CD4-positive, alpha-beta memory T cell (primary cell): ENCODE measurements at regions of chr20 and their contacts with region 1.

Region 1: DNA sequence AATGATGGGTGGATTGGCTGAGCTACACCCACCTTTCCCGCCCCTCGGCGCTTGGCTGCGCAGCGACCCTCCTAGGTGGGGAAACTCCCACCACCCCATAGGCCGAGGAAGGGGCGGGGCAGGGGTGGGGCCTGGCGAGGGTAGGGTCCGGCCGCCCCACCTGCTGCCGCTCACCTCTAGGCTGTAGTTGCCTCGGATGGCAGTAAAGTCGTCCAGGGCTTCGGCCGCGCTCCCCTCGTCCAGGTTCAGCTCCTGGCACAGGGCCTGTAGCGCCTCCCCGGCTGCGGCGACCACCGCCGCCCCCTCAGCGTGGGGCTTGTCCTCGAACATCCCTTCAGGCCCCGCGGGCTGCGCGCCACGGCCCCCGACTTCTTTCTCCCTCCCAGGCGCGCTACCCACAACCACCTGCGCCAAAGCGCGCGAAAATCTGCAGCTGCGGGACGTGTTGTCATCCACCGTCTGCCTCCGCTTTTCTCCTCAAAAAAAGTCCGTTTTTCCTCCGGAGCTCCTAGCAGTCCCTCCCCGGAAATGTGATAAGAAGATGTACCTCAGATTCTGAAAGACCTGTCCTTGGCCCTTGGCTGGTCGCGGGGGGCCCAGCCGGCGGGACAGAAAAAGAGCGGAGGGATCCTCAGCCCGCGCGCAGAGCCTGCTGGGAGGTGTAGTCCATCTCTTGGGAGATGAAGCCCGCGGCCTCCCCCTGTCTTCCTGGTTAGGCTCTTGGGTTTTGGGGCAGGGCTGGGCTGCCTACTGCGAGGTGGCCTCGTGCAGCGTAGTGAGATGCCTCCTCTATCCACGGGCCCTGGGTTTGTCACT is at the start of gene RBL1:
- DNase-seq: peak; percentile 90 to 92 (median 91)
- H3K4me3 ChIP-seq: peak within 1 kb of the TSS; percentile 92
- H3K4me3 Mint-ChIP-seq: peak within 1 kb of the TSS; percentile 98 to 100 (median 99)
- H3K27ac ChIP-seq: peak within 1 kb of the TSS; percentile 85
- H3K27ac Mint-ChIP-seq: peak within 1 kb of the TSS; percentile 99 to 100 (median 100)
- H3K4me1 ChIP-seq: peaks cover 37% of the 10 kb centered on the region
- H3K4me1 Mint-ChIP-seq: peaks cover 18 to 47% (median 30%) of the 10 kb centered on the region in 4 donors
- H3K27me3 ChIP-seq: no peaks in the 10 kb centered on the region
- H3K27me3 Mint-ChIP-seq: peaks cover 0 to 4% of the 10 kb centered on the region in 2 donors
- total RNA-seq, gene RBL1: 29.9 to 39.6 TPM

Region 2: GRCh38 chr20:36951198-36951976 is 144.4 kb before region 1 on chr20 and contains the start of gene SAMHD1:
- CTCF ChIA-PET with region 1: no interaction called
- POLR2A ChIA-PET with region 1: interaction called, 8 read pairs
- intact Hi-C with region 1: loop called (anchors 5 kb)
- DNase-seq: peak; percentile 86 to 89 (median 86)
- H3K4me3 ChIP-seq: peak within 1 kb of the TSS; percentile 90 to 98
- H3K4me3 Mint-ChIP-seq: peak within 1 kb of the TSS; percentile 95 to 100 (median 98)
- H3K27ac ChIP-seq: peak within 1 kb of the TSS; percentile 87
- H3K27ac Mint-ChIP-seq: peak within 1 kb of the TSS; percentile 94 to 100 (median 98)
- H3K4me1 ChIP-seq: peaks cover 49% of the 10 kb centered on the region
- H3K4me1 Mint-ChIP-seq: peaks cover 24 to 55% (median 35%) of the 10 kb centered on the region in 4 donors
- H3K27me3 ChIP-seq: no peaks in the 10 kb centered on the region
- H3K27me3 Mint-ChIP-seq: no peaks in the 10 kb centered on the region
- total RNA-seq, gene SAMHD1: 216 to 223 TPM

Region 3: DNA sequence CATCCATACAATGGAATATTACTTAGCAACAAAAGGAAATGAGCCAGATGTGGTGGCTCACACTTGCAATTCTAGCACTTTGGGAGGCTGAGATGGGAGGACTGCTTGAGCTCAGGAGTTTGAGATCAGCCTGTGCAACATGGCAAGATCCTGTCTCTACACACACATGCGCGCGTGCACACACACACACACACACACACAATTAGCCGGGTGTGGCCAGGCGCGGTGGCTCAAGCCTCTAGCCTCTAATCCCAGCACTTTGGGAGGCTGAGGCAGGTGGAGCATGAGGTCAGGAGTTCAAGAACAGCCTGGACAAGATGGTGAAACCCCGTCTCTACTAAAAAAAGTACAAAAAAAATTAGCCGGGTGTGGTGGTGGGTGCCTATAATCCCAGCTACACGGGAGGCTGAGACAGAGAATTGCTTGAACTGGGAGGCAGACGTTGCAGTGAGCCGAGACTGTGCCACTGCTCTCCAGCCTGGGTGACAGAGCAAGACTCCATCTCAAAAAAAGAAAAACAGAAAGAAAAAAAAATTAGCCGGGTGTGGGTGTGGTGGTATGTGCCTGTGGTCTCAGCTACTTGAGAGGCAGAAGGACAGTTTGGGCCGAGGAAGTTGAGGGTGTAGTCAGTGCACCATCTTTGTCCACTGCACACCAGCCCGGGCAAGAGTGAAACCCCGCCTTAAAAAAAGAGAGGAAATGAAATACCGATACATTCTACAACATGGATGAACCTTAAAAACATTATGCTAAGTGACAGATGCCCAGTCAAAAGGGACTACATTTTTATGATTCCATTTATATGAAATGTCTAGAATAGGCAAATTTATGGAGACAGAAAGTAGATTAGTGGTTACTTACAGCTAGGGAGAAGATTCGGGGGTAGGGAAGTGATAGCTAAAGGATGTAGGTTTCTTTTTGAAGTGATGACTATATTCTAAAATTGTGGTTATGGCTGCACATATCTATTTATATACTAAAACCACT is 52.5 kb before region 1 on chr20:
- CTCF ChIA-PET with region 1: no interaction called
- POLR2A ChIA-PET with region 1: interaction called, 21 read pairs
- intact Hi-C with region 1: no loop called
- DNase-seq: peak; percentile 45 to 61 (median 52)
- H3K4me3 ChIP-seq: peak overlapping the region; percentile 5 to 51
- H3K4me3 Mint-ChIP-seq: peak overlapping the region; percentile 87 to 98 (median 93)
- H3K27ac ChIP-seq: peak overlapping the region; percentile 53
- H3K27ac Mint-ChIP-seq: peak overlapping the region; percentile 88 to 99 (median 96)
- H3K4me1 ChIP-seq: peaks cover 28% of the 10 kb centered on the region
- H3K4me1 Mint-ChIP-seq: peaks cover 13 to 33% (median 23%) of the 10 kb centered on the region in 4 donors
- H3K27me3 ChIP-seq: no peaks in the 10 kb centered on the region
- H3K27me3 Mint-ChIP-seq: no peaks in the 10 kb centered on the region

Region 4: DNA sequence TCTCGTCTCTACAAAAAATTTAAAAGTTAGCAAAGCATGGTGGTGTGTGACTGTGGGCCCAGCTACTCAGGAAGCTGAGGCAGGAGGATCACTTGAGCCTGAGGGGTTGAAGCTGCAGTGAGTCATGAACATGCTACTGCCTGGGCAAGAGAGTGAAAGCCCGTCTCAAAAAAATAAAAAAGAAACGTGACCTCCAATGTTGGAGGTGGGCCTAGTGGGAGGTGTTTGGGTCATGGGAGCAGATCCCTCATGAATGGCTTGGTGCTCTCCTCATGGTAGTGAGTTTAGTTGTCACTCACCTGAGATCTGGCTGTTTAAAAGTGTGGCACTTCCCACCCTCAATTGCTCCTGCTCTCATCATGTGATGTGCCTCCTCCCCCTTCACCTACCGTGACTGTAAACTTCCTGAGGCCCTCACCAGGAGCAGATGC is 24.3 kb before region 1 on chr20:
- CTCF ChIA-PET with region 1: no interaction called
- POLR2A ChIA-PET with region 1: interaction called, 28 read pairs
- intact Hi-C with region 1: no loop called
- DNase-seq: peak; percentile 8 to 58 (median 32)
- H3K4me3 ChIP-seq: no peak overlapping the region
- H3K4me3 Mint-ChIP-seq: peak overlapping the region in 7 of 8 donors; percentile 18 to 77 (median 65)
- H3K27ac ChIP-seq: peak overlapping the region; percentile 29
- H3K27ac Mint-ChIP-seq: peak overlapping the region; percentile 82 to 95 (median 88)
- H3K4me1 ChIP-seq: peaks cover 36% of the 10 kb centered on the region
- H3K4me1 Mint-ChIP-seq: peaks cover 15 to 35% (median 28%) of the 10 kb centered on the region in 4 donors
- H3K27me3 ChIP-seq: no peaks in the 10 kb centered on the region
- H3K27me3 Mint-ChIP-seq: no peaks in the 10 kb centered on the region

Region 5: DNA sequence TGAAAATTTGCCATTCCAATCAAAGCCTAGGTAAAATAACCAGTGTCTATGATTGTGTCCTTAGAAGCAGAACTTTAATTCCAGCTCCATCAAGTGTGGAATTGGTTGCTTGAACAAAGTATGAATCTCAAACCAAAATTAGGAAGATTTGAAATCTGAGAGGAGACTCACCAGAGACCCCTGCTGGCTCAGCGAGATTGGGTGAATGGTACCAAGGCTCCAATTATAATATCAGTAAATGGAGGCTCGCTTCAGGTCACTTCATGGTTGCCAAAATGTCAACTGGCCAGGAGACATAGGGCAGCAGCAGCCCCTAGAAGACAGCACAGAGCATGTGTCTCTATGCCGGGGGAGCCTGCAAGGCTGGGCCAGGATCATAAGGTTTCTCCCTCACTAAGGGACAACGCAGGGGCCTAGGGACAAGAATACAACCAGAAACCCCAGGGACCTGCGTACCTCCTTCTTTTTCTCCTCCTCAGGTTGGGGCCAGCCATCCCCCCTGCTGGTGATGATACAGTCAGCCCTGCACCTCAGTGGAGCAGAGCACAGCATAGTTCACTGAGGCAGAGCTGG is 14.0 kb before region 1 on chr20:
- CTCF ChIA-PET with region 1: interaction called, 19 read pairs
- POLR2A ChIA-PET with region 1: interaction called, 13 read pairs
- intact Hi-C with region 1: no loop called
- DNase-seq: peak in 4 of 5 donors; percentile 36 to 50 (median 44)
- H3K4me3 ChIP-seq: no peak overlapping the region
- H3K4me3 Mint-ChIP-seq: peak overlapping the region in 2 of 8 donors; percentile 16 to 26
- H3K27ac ChIP-seq: no peak overlapping the region
- H3K27ac Mint-ChIP-seq: peak overlapping the region; percentile 40 to 91 (median 67)
- H3K4me1 ChIP-seq: peaks cover 24% of the 10 kb centered on the region
- H3K4me1 Mint-ChIP-seq: peaks cover 16 to 25% (median 21%) of the 10 kb centered on the region in 4 donors
- H3K27me3 ChIP-seq: no peaks in the 10 kb centered on the region
- H3K27me3 Mint-ChIP-seq: no peaks in the 10 kb centered on the region

Region 6: GRCh38 chr20:37178839-37179670 is 83.2 kb after region 1 on chr20 and contains the starts of genes MROH8 and RPN2:
- CTCF ChIA-PET with region 1: interaction called, 4 read pairs
- POLR2A ChIA-PET with region 1: interaction called, 34 read pairs
- intact Hi-C with region 1: loop called (anchors 1 kb)
- DNase-seq: peak; percentile 92 to 96 (median 93)
- H3K4me3 ChIP-seq: peak within 1 kb of the TSS; percentile 96 to 97
- H3K4me3 Mint-ChIP-seq: peak within 1 kb of the TSS; percentile 92 to 99 (median 98)
- H3K27ac ChIP-seq: peak within 1 kb of the TSS; percentile 92
- H3K27ac Mint-ChIP-seq: peak within 1 kb of the TSS; percentile 96 to 98 (median 98)
- H3K4me1 ChIP-seq: peaks cover 46% of the 10 kb centered on the region
- H3K4me1 Mint-ChIP-seq: peaks cover 29 to 58% (median 43%) of the 10 kb centered on the region in 4 donors
- H3K27me3 ChIP-seq: no peaks in the 10 kb centered on the region
- H3K27me3 Mint-ChIP-seq: peaks cover 0 to 2% of the 10 kb centered on the region in 2 donors
- total RNA-seq, gene MROH8: 1.4 to 1.5 TPM
- total RNA-seq, gene RPN2: 125 to 127 TPM

Region 7: DNA sequence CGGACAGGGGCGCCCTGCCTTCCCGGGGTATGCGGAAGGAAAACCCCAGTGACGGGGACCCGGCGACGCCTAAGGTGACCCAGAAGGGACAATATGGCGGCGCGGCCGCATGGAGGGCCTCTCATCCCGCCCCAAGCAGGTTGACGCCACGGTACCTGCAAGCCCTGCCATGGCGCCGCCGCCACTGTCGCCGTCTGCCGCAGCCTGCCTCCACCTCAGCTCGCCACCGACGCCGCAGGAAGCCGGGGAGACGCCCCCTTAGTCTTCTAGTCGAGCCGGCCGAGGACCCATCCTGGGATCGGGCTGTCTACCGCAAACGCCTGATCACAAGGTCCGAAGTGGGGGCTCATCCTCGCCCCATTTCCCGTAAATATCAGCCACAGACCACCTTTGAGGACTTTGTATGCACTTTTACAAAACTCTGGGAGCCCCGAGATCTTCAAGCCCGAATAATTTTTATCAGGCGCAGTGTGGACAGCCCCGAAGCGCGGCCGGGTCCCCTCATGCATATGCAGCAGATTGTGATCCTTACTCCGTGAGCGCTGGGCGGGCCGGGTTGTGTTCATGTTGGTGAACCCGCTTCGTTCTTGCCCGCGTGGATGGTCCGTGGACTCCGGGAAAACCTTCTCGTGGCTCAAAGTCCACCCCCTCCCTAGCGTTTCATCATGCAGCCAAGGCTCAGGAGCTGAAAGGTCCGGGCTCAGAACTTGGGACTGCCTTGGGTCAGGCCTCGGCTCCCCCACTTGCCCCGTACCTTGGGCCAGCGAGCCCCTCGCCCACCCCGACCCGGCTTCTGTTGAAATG is 432.0 kb after region 1 on chr20 and contains the start of gene BLCAP:
- CTCF ChIA-PET with region 1: no interaction called
- POLR2A ChIA-PET with region 1: interaction called, 3 read pairs
- intact Hi-C with region 1: loop called (anchors 5 kb)
- DNase-seq: peak; percentile 96 to 97 (median 96)
- H3K4me3 ChIP-seq: peak within 1 kb of the TSS; percentile 90 to 100
- H3K4me3 Mint-ChIP-seq: peak within 1 kb of the TSS; percentile 86 to 96 (median 90)
- H3K27ac ChIP-seq: peak within 1 kb of the TSS; percentile 99
- H3K27ac Mint-ChIP-seq: peak within 1 kb of the TSS; percentile 98 to 100 (median 99)
- H3K4me1 ChIP-seq: peaks cover 37% of the 10 kb centered on the region
- H3K4me1 Mint-ChIP-seq: peaks cover 32 to 60% (median 47%) of the 10 kb centered on the region in 4 donors
- H3K27me3 ChIP-seq: no peaks in the 10 kb centered on the region
- H3K27me3 Mint-ChIP-seq: no peaks in the 10 kb centered on the region
- total RNA-seq, gene BLCAP: 81.7 to 87.5 TPM